ENCODE measurements at regions of chr15 and their contacts with region 1.

Region 1: GRCh38 chr15:64093627-64094417 is at the start of gene CIAO2A:
- DNase-seq: peak; percentile 99
- H3K4me3 Mint-ChIP-seq: peak within 1 kb of the TSS; percentile 98
- H3K27ac Mint-ChIP-seq: peak within 1 kb of the TSS; percentile 97
- H3K4me1 Mint-ChIP-seq: peaks cover 62% of the 10 kb centered on the region
- H3K27me3 Mint-ChIP-seq: no peaks in the 10 kb centered on the region
- total RNA-seq, gene CIAO2A: 105 TPM

Region 2: GRCh38 chr15:64153480-64154367 is 59.9 kb after region 1 on chr15:
- CTCF ChIA-PET with region 1: interaction called, 10 read pairs
- intact Hi-C with region 1: loop called (anchors 1 kb)
- DNase-seq: peak; percentile 96
- H3K4me3 Mint-ChIP-seq: peak overlapping the region; percentile 50
- H3K27ac Mint-ChIP-seq: peak overlapping the region; percentile 67
- H3K4me1 Mint-ChIP-seq: peaks cover 26% of the 10 kb centered on the region
- H3K27me3 Mint-ChIP-seq: peaks cover 11% of the 10 kb centered on the region

Region 3: GRCh38 chr15:64381000-64381752 is 287.4 kb after region 1 on chr15 and contains the start of gene PCLAF:
- CTCF ChIA-PET with region 1: no interaction called
- intact Hi-C with region 1: loop called (anchors 1 kb)
- DNase-seq: peak; percentile 97
- H3K4me3 Mint-ChIP-seq: peak within 1 kb of the TSS; percentile 99
- H3K27ac Mint-ChIP-seq: peak within 1 kb of the TSS; percentile 92
- H3K4me1 Mint-ChIP-seq: peaks cover 19% of the 10 kb centered on the region
- H3K27me3 Mint-ChIP-seq: no peaks in the 10 kb centered on the region
- total RNA-seq, gene PCLAF: 117 to 118 TPM

Region 4: GRCh38 chr15:64387562-64388168 is 293.8 kb after region 1 on chr15 and contains the start of gene TRIP4:
- CTCF ChIA-PET with region 1: no interaction called
- intact Hi-C with region 1: loop called (anchors 1 kb)
- DNase-seq: peak; percentile 98
- H3K4me3 Mint-ChIP-seq: peak within 1 kb of the TSS; percentile 94
- H3K27ac Mint-ChIP-seq: peak within 1 kb of the TSS; percentile 78
- H3K4me1 Mint-ChIP-seq: peaks cover 15% of the 10 kb centered on the region
- H3K27me3 Mint-ChIP-seq: no peaks in the 10 kb centered on the region
- total RNA-seq, gene TRIP4: 13.7 to 14.5 TPM